Activated CD4-positive, alpha-beta T cell treated with anti-CD3 and anti-CD28 coated beads, Interleukin-2, amount 10 ng/mL, durations not matched to agents 24 days and 14 days (primary cell): ENCODE measurements at regions of chr19 and their contacts with region 1.

Region 1: DNA sequence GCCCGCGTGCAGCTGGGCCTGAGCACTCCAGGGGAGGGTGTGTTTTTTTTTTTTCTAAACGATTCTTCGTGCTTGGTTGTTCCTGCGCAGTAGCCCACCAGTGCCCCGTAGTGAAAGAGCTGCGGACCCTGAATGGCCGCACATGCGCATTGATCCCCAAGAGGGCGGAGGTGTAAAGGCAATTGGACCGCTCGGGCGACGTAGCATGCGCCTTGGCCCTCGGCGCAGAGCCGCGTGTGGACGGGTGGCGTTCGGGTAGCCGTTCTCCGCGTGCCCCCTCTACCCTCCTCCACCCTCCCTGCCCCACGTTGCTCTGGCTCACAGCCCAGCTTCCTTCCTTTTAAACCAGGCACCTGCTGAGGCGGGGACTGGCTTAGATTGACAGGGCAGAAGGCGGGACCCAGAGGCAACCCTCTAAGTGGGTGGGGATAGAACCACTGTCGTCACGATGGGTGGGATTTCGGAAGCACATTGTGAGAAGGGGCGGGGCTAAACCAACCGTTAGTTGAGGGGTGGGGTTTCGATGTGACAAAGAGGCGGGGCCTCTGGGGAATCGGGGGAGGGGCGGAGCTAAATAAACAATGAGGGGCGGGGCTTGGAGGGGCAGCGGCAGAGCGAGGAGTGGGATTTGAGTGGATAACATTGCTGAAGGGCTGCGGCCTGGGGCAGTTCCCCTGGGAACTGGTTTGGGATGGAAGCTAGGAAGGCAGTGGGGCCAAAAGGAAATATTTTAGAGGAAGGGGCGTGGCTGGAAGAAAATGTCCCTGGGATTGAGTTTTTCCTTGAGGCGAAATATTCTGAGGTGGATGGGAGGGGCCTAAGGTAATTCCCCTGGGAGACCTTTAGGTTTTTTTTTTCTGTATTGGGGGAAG is 543 bp upstream of the NUP62 start:
- DNase-seq: peak; percentile 98
- H3K4me3 Mint-ChIP-seq: peak overlapping the region; percentile 97
- H3K27ac Mint-ChIP-seq: peak overlapping the region; percentile 100
- H3K4me1 Mint-ChIP-seq: peaks cover 54% of the 10 kb centered on the region
- H3K27me3 Mint-ChIP-seq: peaks cover 3% of the 10 kb centered on the region

Region 2: GRCh38 chr19:49896863-49897621 is 32.8 kb before region 1 on chr19 and contains the start of gene IL4I1:
- intact Hi-C with region 1: loop called (anchors 1 kb)
- DNase-seq: peak; percentile 88
- H3K4me3 Mint-ChIP-seq: peak within 1 kb of the TSS; percentile 89
- H3K27ac Mint-ChIP-seq: peak within 1 kb of the TSS; percentile 100
- H3K4me1 Mint-ChIP-seq: peaks cover 51% of the 10 kb centered on the region
- H3K27me3 Mint-ChIP-seq: peaks cover 2% of the 10 kb centered on the region
- total RNA-seq, gene IL4I1: 40.4 and 41.4 TPM in 2 replicates

Region 3: DNA sequence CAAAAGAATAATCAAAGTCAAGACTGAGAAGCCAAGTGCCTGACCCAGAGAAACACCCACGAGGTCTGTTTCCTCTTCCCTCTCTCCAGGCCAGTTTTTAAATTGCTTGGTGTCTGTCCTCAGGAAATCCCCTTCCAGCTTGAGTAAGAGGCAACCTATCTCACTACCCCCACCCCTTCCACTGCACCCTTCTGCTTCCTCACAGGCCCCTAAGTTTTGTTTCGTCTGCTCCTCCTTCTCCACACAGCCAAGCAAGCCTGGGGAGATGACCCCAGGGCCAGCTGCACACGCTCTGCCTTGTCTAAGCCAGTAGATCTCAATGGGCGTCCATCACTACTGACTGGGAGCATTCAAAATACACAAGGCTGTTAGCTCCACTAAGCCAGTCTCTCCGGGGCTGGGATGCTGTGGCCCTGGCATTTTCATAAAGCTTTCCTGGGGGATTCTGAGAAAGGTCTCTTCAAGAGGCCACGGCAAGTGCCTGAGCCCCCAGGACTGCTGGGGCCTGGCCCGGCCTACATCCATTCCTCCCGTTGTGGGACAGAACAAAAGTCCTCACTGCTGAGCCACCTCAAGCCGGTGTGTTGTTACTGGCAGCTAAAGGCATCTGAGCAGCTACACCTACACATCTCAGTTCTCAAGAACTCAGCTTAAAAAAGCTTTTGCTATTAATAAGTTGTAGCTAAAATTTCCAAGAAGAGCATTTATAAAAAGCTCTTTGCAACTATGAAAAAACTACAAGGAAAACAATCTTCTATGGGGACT is 18.3 kb before region 1 on chr19:
- intact Hi-C with region 1: loop called (anchors 2 kb)
- DNase-seq: peak; percentile 70
- H3K4me3 Mint-ChIP-seq: peak overlapping the region; percentile 72
- H3K27ac Mint-ChIP-seq: peak overlapping the region; percentile 94
- H3K4me1 Mint-ChIP-seq: peaks cover 65% of the 10 kb centered on the region
- H3K27me3 Mint-ChIP-seq: no peaks in the 10 kb centered on the region